CD4-positive, alpha-beta memory T cell (primary cell): ENCODE measurements at regions of chr3 and their contacts with region 1.

Region 1: GRCh38 chr3:98593046-98593936 is at the start of gene CPOX:
- DNase-seq: peak; percentile 74 to 87 (median 79)
- H3K4me3 ChIP-seq: peak within 1 kb of the TSS; percentile 43 to 92
- H3K4me3 Mint-ChIP-seq: peak within 1 kb of the TSS; percentile 93 to 100 (median 98)
- H3K27ac ChIP-seq: peak within 1 kb of the TSS; percentile 71
- H3K27ac Mint-ChIP-seq: peak within 1 kb of the TSS; percentile 74 to 99 (median 98)
- H3K4me1 ChIP-seq: peaks cover 32% of the 10 kb centered on the region
- H3K4me1 Mint-ChIP-seq: peaks cover 28 to 46% (median 37%) of the 10 kb centered on the region in 4 donors
- H3K27me3 ChIP-seq: no peaks in the 10 kb centered on the region
- H3K27me3 Mint-ChIP-seq: no peaks in the 10 kb centered on the region
- total RNA-seq, gene CPOX: 41.1 to 41.3 TPM

Region 2: DNA sequence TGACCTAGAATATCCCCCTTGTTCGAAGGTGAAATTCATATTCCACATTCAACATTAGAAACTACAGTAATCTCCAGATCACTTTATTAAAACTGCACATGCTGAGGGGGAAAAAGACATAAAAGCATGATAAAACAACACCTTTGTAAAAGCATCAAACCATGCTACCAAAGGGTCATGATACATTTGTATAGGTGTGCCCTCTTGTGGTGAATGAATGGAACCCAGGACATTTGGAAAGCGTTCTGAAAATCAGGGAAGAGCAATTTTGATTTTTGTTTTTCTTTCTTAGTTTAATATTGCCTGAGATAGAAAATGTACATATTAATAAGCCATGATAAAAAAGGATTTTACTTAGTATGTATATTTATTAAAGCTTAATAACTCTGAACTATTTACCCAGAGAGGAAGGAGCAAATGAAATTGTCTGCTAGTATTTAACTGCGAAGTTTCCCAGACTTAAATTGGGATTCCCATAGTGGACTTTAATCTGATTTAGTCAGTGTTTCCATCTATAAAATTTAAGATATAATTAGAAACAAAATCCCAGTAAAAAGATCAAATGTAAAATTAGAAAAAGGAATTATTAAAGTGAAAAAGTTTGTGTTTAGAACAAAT is 934.5 kb before region 1 on chr3:
- CTCF ChIA-PET with region 1: no interaction called
- POLR2A ChIA-PET with region 1: no interaction called
- intact Hi-C with region 1: no loop called
- DNase-seq: no peak
- H3K4me3 ChIP-seq: no peak overlapping the region
- H3K4me3 Mint-ChIP-seq: no peak overlapping the region
- H3K27ac ChIP-seq: no peak overlapping the region
- H3K27ac Mint-ChIP-seq: no peak overlapping the region
- H3K4me1 ChIP-seq: no peaks in the 10 kb centered on the region
- H3K4me1 Mint-ChIP-seq: no peaks in the 10 kb centered on the region
- H3K27me3 ChIP-seq: no peaks in the 10 kb centered on the region
- H3K27me3 Mint-ChIP-seq: peaks cover 0 to 5% of the 10 kb centered on the region in 2 donors

Region 3: DNA sequence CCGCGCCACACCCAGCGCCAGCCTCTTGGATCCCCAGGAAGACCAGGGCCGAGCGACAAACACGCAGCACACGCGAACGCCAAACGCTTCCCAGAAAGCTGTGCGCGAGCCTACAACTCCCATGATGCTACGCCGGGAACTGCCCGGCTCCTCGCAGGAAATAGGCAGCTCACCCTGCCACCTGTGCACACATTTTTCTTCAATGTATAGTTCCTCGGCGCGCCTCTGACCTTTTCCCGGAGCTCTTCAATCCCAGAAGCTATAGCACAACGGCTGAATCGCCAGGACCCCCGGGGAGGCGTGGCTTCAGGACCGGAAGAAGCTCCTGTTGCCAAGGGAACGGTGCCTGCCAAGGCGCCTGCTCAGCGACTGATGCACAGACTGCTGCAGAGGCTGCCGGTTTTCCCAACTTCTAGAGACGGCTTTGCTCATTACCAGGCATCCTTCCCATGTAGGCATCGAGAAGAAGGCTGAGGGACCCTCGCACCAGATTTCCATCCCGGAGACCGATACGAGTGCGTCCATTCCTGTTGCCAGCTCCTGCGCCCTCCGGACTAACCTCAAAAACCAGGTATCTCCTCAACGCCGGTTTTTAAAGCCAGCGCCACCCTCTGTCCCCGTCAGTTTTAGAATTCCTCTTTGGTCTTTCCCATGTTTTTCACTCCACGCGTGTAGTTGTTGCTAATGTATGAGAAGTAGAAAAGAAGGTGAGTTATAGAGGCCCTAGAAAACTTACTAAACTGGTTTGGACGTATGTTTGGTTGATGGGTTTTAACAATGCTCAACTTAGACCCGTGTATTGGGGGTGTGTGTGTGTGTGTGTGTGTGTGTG is 828.7 kb before region 1 on chr3 and contains the start of gene ARL6:
- CTCF ChIA-PET with region 1: no interaction called
- POLR2A ChIA-PET with region 1: no interaction called
- intact Hi-C with region 1: loop called (anchors 2 kb)
- DNase-seq: peak; percentile 71 to 80 (median 75)
- H3K4me3 ChIP-seq: peak within 1 kb of the TSS; percentile 84
- H3K4me3 Mint-ChIP-seq: peak within 1 kb of the TSS; percentile 97 to 99 (median 98)
- H3K27ac ChIP-seq: peak within 1 kb of the TSS; percentile 73
- H3K27ac Mint-ChIP-seq: peak within 1 kb of the TSS; percentile 93 to 98 (median 95)
- H3K4me1 ChIP-seq: peaks cover 24% of the 10 kb centered on the region
- H3K4me1 Mint-ChIP-seq: peaks cover 11 to 32% (median 23%) of the 10 kb centered on the region in 4 donors
- H3K27me3 ChIP-seq: no peaks in the 10 kb centered on the region
- H3K27me3 Mint-ChIP-seq: no peaks in the 10 kb centered on the region
- total RNA-seq, gene ARL6: 3.7 to 6.4 TPM

Region 4: GRCh38 chr3:98039322-98040024 is 553.8 kb before region 1 on chr3:
- CTCF ChIA-PET with region 1: interaction called, 16 read pairs
- POLR2A ChIA-PET with region 1: interaction called, 3 read pairs
- intact Hi-C with region 1: loop called (anchors 1 kb)
- DNase-seq: peak; percentile 84 to 90 (median 89)
- H3K4me3 ChIP-seq: peak overlapping the region; percentile 57 to 58
- H3K4me3 Mint-ChIP-seq: peak overlapping the region; percentile 85 to 96 (median 88)
- H3K27ac ChIP-seq: peak overlapping the region; percentile 68
- H3K27ac Mint-ChIP-seq: peak overlapping the region; percentile 82 to 98 (median 96)
- H3K4me1 ChIP-seq: no peaks in the 10 kb centered on the region
- H3K4me1 Mint-ChIP-seq: peaks cover 2 to 8% (median 5%) of the 10 kb centered on the region in 4 donors
- H3K27me3 ChIP-seq: peaks cover 3% of the 10 kb centered on the region
- H3K27me3 Mint-ChIP-seq: peaks cover 7 to 10% of the 10 kb centered on the region in 2 donors

Region 5: DNA sequence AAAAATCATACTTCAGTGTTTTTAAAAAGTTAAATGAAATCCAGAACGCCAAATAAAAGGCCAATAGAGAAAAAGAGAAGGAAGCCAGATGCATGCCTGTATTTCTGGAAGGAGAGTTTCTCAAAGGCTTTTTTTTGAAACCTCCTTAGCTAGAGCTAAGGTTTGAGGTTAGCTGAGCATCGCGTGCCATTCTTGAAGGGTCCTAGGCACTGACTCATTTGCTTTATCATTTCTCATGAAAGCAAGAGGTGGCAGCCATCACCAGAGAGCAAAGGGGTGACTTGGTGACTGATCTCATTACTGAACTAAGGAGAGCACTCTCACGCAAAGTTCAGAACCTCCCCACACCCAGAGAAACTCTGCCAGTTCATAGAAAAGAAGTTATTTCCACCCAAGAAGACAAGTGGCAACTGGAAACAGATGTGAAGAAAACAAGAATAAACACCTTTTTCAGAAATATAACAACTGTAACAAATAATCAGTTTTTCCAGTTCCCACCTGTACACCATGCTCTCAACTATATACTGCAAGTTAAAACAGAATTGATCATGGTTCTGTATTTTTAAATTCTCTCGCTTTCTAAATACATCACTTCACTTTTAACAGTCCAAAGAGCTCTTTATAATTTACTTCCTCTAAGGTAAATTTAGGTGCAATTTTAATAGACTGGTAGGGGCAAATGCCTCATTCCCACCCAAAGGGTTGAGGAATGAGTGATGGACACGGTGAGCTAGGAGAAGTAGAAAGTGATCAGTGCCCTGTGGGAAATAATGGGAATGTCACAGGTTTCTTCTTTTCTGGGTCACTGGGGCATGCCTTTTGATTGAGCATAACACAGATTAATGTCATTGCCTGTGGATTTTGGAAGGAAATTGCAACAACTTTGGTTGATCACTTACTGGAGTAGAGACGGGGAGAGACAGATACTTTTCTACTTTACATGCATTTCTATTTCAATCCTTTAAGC is 36.8 kb before region 1 on chr3:
- CTCF ChIA-PET with region 1: interaction called, 6 read pairs
- POLR2A ChIA-PET with region 1: interaction called, 24 read pairs
- intact Hi-C with region 1: loop called (anchors 2 kb)
- DNase-seq: peak; percentile 43 to 90 (median 54)
- H3K4me3 ChIP-seq: peak overlapping the region in 1 of 2 donors; percentile 0
- H3K4me3 Mint-ChIP-seq: peak overlapping the region; percentile 72 to 89 (median 80)
- H3K27ac ChIP-seq: peak overlapping the region; percentile 73
- H3K27ac Mint-ChIP-seq: peak overlapping the region; percentile 94 to 99 (median 97)
- H3K4me1 ChIP-seq: peaks cover 86% of the 10 kb centered on the region
- H3K4me1 Mint-ChIP-seq: peaks cover 56 to 89% (median 76%) of the 10 kb centered on the region in 4 donors
- H3K27me3 ChIP-seq: no peaks in the 10 kb centered on the region
- H3K27me3 Mint-ChIP-seq: no peaks in the 10 kb centered on the region

Region 6: DNA sequence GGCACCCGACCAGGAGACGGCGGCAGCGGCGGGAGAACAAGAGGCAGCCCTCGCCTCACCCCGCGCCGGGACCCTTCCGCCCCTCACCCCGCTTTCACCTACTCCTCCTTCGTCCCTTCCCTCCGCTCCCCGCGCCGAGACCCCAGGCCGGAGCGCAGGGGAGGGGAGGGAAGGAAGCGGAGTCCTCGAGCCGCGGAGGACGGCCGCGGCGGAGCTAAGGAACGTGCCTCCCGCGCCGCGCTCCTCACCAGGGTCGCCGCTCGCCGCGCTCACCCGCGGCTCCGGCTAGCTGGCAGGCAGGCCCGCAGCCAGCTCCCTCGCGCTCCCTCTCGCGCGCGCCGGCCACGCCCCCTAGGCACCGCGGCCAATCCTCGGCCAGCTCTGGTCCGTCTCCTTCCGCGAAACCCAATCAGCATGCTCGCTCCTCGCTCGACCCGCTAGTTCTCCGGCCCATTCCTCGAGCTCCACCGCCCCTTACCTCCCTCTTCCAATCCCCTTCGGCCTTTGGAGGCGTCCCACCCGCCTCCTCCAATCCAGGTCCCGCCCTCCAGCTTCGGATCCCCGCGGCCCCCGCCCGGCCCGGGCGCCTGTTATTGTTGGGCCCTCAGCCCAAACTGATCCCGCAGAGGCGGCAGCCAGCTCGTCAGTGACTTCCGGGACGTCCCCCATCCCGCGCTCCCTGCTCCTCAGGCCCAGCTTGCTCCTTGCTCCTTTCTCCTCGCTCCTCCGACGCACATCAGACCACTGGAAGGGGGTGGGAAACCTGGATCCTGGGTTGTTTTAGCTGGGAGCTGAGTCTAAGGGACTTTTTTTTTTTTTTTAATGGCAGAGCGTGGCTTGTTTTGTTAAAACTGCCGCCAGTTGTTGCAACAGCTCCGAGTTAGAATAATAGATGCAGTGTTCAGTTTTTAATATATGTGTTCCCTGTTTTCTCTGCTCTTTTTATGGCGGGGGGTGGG is 308.4 kb after region 1 on chr3 and contains the start of gene DCBLD2:
- CTCF ChIA-PET with region 1: no interaction called
- POLR2A ChIA-PET with region 1: no interaction called
- intact Hi-C with region 1: loop called (anchors 5 kb)
- DNase-seq: peak; percentile 88 to 94 (median 91)
- H3K4me3 ChIP-seq: peak within 1 kb of the TSS; percentile 53 to 75
- H3K4me3 Mint-ChIP-seq: peak within 1 kb of the TSS; percentile 87 to 96 (median 93)
- H3K27ac ChIP-seq: peak within 1 kb of the TSS; percentile 12
- H3K27ac Mint-ChIP-seq: peak within 1 kb of the TSS; percentile 64 to 92 (median 82)
- H3K4me1 ChIP-seq: peaks cover 8% of the 10 kb centered on the region
- H3K4me1 Mint-ChIP-seq: peaks cover 8 to 28% (median 12%) of the 10 kb centered on the region in 4 donors
- H3K27me3 ChIP-seq: peaks cover 8% of the 10 kb centered on the region
- H3K27me3 Mint-ChIP-seq: peaks cover 4 to 25% of the 10 kb centered on the region in 2 donors
- total RNA-seq, gene DCBLD2: 1.7 to 2.5 TPM